Right cardiac atrium (tissue), 5 donors: ENCODE measurements at regions of chr5 and their contacts with region 1.

Region 1: DNA sequence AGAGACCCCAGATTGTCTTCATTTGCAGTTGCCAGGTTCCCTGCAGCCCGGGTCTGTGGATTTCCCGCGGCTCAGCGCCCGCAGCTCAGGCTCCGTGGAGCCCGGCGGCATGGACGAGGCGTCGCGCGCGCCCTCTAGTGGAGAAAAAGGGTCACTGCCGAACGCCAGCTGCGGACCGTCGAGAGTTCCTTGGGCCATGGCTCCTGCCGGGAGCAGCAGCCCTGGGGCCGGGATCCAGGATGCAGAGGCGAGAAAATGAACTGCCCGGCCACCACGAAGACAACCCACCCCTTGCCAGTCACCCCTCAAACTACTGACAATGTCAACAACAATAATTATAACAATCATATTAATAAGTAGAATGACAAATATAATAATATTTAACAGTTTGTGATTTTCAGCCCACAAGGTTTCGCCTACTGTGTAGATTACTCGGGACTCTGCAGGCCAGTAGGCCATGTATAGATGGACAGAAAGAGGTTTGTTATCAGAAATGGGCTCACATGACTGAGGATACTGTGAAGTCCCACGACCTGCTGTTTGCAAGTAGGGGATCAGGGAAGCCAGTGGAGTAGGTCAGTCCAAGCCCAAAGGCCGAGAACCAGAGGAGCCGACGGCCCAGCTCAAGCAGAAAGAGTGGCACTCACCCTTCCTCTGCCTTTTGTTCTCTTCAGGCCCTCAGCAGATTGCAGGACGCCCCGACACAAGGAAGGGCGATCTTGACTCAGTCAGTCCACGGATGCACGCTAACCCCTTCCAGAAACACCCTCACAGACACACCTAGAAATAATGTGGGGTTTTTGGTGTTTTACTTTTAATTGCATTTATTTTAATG is 43.1 kb downstream of the BOD1 start:
- DNase-seq: peak; percentile 77 to 92 (median 92)
- ATAC-seq: peak; percentile 92
- H3K4me3 ChIP-seq: no peak overlapping the region
- H3K27ac ChIP-seq: no peak overlapping the region
- H3K4me1 ChIP-seq: no peaks in the 10 kb centered on the region
- H3K27me3 ChIP-seq: no peaks in the 10 kb centered on the region

Region 2: GRCh38 chr5:173293817-173294672 is 279.3 kb before region 1 on chr5:
- intact Hi-C with region 1: loop called in 2 of 4 experiments (anchors 5 to 10 kb)
- DNase-seq: peak; percentile 75 to 89 (median 87)
- ATAC-seq: peak; percentile 60 to 62
- H3K4me3 ChIP-seq: no peak overlapping the region
- H3K27ac ChIP-seq: no peak overlapping the region
- H3K4me1 ChIP-seq: no peaks in the 10 kb centered on the region
- H3K27me3 ChIP-seq: no peaks in the 10 kb centered on the region

Region 3: DNA sequence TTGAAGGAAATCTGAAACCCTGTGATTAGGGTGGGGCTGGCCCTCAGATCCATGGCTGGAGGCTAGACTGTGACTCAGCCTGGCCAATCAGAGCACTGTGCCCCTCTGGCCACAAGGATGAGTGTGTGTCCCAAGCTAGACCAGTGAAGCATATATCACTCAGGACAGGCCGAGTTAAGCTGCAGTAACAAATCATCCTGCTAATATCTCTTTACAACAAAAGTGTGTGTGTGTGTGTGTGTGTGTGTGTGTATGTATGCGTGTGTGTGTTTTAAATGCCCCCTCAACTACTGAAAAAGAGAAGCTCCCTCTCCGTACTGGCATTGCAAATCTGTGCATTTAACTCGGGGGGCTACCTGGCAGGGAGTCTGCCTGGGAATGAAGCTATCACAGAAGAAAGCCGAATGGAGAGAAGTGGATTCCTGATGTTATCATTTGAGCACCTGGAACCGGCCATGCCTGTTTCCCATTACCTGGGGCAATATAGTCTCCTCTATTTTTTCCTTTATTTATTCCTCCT is 270.7 kb before region 1 on chr5:
- intact Hi-C with region 1: loop called in 3 of 4 experiments (anchors 5 to 10 kb)
- DNase-seq: no peak
- ATAC-seq: peak in 1 of 2 donors; percentile 58
- H3K4me3 ChIP-seq: no peak overlapping the region
- H3K27ac ChIP-seq: no peak overlapping the region
- H3K4me1 ChIP-seq: no peaks in the 10 kb centered on the region
- H3K27me3 ChIP-seq: no peaks in the 10 kb centered on the region

Region 4: GRCh38 chr5:173341961-173342430 is 231.3 kb before region 1 on chr5:
- intact Hi-C with region 1: loop called in 2 of 4 experiments (anchors 5 to 10 kb)
- DNase-seq: no peak
- ATAC-seq: no peak
- H3K4me3 ChIP-seq: no peak overlapping the region
- H3K27ac ChIP-seq: no peak overlapping the region
- H3K4me1 ChIP-seq: no peaks in the 10 kb centered on the region
- H3K27me3 ChIP-seq: no peaks in the 10 kb centered on the region

Region 5: GRCh38 chr5:173517648-173518047 is 55.7 kb before region 1 on chr5:
- intact Hi-C with region 1: no loop called
- DNase-seq: no peak
- ATAC-seq: no peak
- H3K4me3 ChIP-seq: no peak overlapping the region
- H3K27ac ChIP-seq: no peak overlapping the region
- H3K4me1 ChIP-seq: no peaks in the 10 kb centered on the region
- H3K27me3 ChIP-seq: no peaks in the 10 kb centered on the region

Region 6: DNA sequence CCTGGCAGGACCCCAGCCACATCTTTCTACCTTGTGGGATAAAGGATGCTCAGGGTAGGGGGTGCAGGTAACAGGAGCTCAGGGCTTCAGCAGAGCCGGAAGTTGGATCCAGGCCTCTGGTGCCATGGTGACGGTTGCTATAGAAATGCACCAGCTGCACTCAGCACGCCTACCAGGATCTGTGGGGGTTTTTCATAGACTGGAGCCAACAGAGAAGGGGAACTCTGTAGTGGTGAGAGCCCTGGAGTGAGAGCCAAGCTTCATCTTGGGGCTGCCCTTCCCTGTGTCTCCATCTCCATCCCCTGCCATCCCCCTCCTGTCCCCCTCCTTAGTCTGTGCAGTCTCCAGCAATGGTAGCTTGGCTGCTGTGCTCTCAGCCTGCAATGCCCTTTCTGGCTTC is 70.6 kb after region 1 on chr5:
- intact Hi-C with region 1: no loop called
- DNase-seq: no peak
- ATAC-seq: no peak
- H3K4me3 ChIP-seq: no peak overlapping the region
- H3K27ac ChIP-seq: no peak overlapping the region
- H3K4me1 ChIP-seq: peaks cover 2% of the 10 kb centered on the region
- H3K27me3 ChIP-seq: no peaks in the 10 kb centered on the region